Endothelial cell of umbilical vein (primary cell): ENCODE measurements at regions of chr1 and their contacts with region 1.

Region 1: DNA sequence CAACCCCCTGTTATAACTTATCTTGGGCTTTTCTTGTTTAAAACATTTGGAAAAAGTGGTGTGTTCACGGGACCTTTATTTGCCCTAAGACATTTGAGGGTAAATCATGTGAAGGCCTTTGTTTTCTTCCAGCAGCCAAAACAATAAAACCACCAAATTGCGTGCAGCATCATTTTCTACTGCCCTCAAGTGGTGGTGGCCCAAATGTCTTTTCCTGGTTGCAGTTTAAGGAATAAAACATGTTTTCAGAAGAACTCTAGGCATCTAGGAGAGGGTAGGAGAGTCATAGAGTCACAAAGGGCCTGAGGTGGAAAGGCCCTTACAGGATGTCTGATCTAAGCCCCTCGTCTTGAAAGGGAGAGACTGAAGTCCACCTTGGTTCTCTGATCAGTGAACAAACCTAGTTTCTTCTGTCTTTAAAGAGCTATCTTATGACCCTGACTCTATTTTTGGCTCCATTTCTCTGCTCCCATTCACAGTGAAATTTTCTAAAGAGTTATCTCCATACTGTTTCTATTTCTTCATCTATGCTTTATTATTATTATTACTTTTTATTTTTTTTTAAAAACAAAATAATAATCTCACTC is 16.0 kb upstream of the EPS15 start:
- DNase-seq: peak; percentile 89
- H3K4me3 ChIP-seq: no peak overlapping the region
- H3K27ac ChIP-seq: no peak overlapping the region
- H3K4me1 ChIP-seq: peaks cover 10% of the 10 kb centered on the region
- H3K27me3 ChIP-seq: no peaks in the 10 kb centered on the region
- CTCF ChIP-seq: peak; percentile 65 to 83
- POLR2A ChIP-seq: no peak

Region 2: DNA sequence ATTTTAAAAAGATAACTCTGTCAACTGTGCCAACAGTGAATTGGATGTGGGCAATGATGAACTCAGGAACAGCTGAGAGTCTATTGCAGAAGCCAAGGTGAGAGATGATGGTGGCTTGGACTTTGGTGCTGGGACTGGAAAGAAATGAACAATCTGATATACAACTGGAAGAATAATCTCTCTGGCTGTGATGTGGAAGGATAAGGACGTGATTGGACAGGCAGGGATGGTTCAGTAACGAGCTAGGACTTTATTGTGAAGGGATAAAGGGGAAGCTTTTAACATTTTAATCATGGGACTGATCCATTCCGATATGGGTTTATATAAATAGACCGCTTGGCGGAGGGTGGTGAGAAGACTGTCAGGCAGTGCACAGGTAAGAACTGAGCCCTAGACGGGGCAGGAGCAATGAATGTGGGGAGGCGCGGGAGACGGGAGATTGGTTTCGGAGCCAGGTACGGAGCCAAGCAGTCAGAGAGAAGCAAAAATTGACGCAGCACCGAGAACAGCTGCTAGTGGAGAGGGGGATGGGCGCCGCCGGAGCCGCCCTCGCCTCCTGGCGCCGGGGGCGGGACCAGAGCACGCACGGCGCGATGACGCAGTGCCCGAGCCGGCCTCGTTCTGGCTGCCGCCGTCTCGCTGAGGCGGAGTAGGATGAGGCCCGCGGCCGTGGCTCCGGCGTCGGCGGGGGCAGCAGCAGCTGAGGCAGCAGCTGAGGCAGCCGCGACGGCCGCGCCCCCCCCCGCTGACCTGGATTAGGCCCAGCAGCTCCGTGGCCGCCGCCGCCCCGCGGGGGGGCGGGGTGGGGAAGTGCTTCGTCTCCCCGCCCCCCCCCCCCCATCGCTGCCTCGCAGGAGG is 299.2 kb before region 1 on chr1 and contains the start of gene RNF11:
- CTCF ChIA-PET with region 1: no interaction called
- POLR2A ChIA-PET with region 1: no interaction called
- dilution Hi-C with region 1: no loop called
- intact Hi-C with region 1: loop called (anchors 10 kb)
- DNase-seq: peak; percentile 91
- H3K4me3 ChIP-seq: peak within 1 kb of the TSS; percentile 88 to 98 (median 91)
- H3K27ac ChIP-seq: peak within 1 kb of the TSS; percentile 97
- H3K4me1 ChIP-seq: peaks cover 23% of the 10 kb centered on the region
- H3K27me3 ChIP-seq: no peaks in the 10 kb centered on the region
- CTCF ChIP-seq: peak in 1 of 2 donors; percentile 0
- POLR2A ChIP-seq: peak; percentile 95
- total RNA-seq, gene RNF11: 82.9 and 94.4 TPM in 2 replicates

Region 3: GRCh38 chr1:51445351-51446090 is 89.6 kb before region 1 on chr1:
- CTCF ChIA-PET with region 1: interaction called, 10 read pairs
- POLR2A ChIA-PET with region 1: no interaction called
- dilution Hi-C with region 1: no loop called
- intact Hi-C with region 1: no loop called
- DNase-seq: no peak
- H3K4me3 ChIP-seq: no peak overlapping the region
- H3K27ac ChIP-seq: no peak overlapping the region
- H3K4me1 ChIP-seq: no peaks in the 10 kb centered on the region
- H3K27me3 ChIP-seq: no peaks in the 10 kb centered on the region
- CTCF ChIP-seq: no peak
- POLR2A ChIP-seq: no peak

Region 4: DNA sequence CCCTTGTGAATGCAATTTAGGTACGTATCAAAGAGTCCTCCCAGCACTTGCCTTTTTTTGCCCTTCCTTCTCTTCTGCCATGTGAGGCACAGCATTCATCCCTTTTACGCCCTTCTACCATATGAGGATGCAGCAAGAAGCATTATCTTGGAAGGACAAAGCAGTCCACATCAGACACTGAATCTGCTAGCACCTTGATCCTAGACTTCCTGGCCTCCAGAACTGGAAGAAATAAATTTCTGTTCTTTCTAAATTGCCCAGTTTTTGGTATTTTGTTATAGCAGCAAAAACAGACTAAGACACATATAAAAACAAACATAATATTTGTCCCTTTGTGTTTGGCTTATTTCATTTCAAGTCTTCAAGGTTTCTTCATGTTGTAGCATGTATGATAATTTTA is 36.2 kb before region 1 on chr1:
- CTCF ChIA-PET with region 1: no interaction called
- POLR2A ChIA-PET with region 1: no interaction called
- dilution Hi-C with region 1: no loop called
- intact Hi-C with region 1: no loop called
- DNase-seq: no peak
- H3K4me3 ChIP-seq: no peak overlapping the region
- H3K27ac ChIP-seq: no peak overlapping the region
- H3K4me1 ChIP-seq: no peaks in the 10 kb centered on the region
- H3K27me3 ChIP-seq: no peaks in the 10 kb centered on the region
- CTCF ChIP-seq: no peak
- POLR2A ChIP-seq: no peak

Region 5: GRCh38 chr1:51519048-51519864 is 15.8 kb before region 1 on chr1 and contains the start of gene EPS15:
- CTCF ChIA-PET with region 1: interaction called, 21 read pairs
- POLR2A ChIA-PET with region 1: no interaction called
- dilution Hi-C with region 1: no loop called
- intact Hi-C with region 1: no loop called
- DNase-seq: peak; percentile 55
- H3K4me3 ChIP-seq: peak within 1 kb of the TSS; percentile 81 to 96 (median 84)
- H3K27ac ChIP-seq: peak within 1 kb of the TSS; percentile 52
- H3K4me1 ChIP-seq: peaks cover 24% of the 10 kb centered on the region
- H3K27me3 ChIP-seq: no peaks in the 10 kb centered on the region
- CTCF ChIP-seq: no peak
- POLR2A ChIP-seq: peak; percentile 66
- total RNA-seq, gene EPS15: 44.8 and 52.4 TPM in 2 replicates

Region 6: GRCh38 chr1:51569284-51570062 is 34.4 kb after region 1 on chr1:
- CTCF ChIA-PET with region 1: interaction called, 10 read pairs
- POLR2A ChIA-PET with region 1: no interaction called
- dilution Hi-C with region 1: no loop called
- intact Hi-C with region 1: no loop called
- DNase-seq: peak; percentile 77
- H3K4me3 ChIP-seq: no peak overlapping the region
- H3K27ac ChIP-seq: peak overlapping the region; percentile 64
- H3K4me1 ChIP-seq: peaks cover 21% of the 10 kb centered on the region
- H3K27me3 ChIP-seq: no peaks in the 10 kb centered on the region
- CTCF ChIP-seq: peak in 1 of 2 donors; percentile 3
- POLR2A ChIP-seq: no peak

Region 7: GRCh38 chr1:51600529-51600928 is 65.4 kb after region 1 on chr1:
- CTCF ChIA-PET with region 1: no interaction called
- POLR2A ChIA-PET with region 1: no interaction called
- dilution Hi-C with region 1: no loop called
- intact Hi-C with region 1: no loop called
- DNase-seq: no peak
- H3K4me3 ChIP-seq: no peak overlapping the region
- H3K27ac ChIP-seq: no peak overlapping the region
- H3K4me1 ChIP-seq: no peaks in the 10 kb centered on the region
- H3K27me3 ChIP-seq: peaks cover 0 to 4% of the 10 kb centered on the region in 2 experiments
- CTCF ChIP-seq: no peak
- POLR2A ChIP-seq: no peak

Region 8: GRCh38 chr1:51679435-51679834 is 144.3 kb after region 1 on chr1:
- CTCF ChIA-PET with region 1: no interaction called
- POLR2A ChIA-PET with region 1: no interaction called
- dilution Hi-C with region 1: no loop called
- intact Hi-C with region 1: no loop called
- DNase-seq: no peak
- H3K4me3 ChIP-seq: no peak overlapping the region
- H3K27ac ChIP-seq: no peak overlapping the region
- H3K4me1 ChIP-seq: no peaks in the 10 kb centered on the region
- H3K27me3 ChIP-seq: no peaks in the 10 kb centered on the region
- CTCF ChIP-seq: no peak
- POLR2A ChIP-seq: no peak

Region 9: GRCh38 chr1:51986718-51987117 is 451.6 kb after region 1 on chr1:
- CTCF ChIA-PET with region 1: no interaction called
- POLR2A ChIA-PET with region 1: no interaction called
- dilution Hi-C with region 1: no loop called
- intact Hi-C with region 1: no loop called
- DNase-seq: no peak
- H3K4me3 ChIP-seq: no peak overlapping the region
- H3K27ac ChIP-seq: no peak overlapping the region
- H3K4me1 ChIP-seq: no peaks in the 10 kb centered on the region
- H3K27me3 ChIP-seq: peaks cover 0 to 5% of the 10 kb centered on the region in 2 experiments
- CTCF ChIP-seq: no peak
- POLR2A ChIP-seq: no peak